ENCODE measurements at regions of chr10 and their contacts with region 1.

Region 1: DNA sequence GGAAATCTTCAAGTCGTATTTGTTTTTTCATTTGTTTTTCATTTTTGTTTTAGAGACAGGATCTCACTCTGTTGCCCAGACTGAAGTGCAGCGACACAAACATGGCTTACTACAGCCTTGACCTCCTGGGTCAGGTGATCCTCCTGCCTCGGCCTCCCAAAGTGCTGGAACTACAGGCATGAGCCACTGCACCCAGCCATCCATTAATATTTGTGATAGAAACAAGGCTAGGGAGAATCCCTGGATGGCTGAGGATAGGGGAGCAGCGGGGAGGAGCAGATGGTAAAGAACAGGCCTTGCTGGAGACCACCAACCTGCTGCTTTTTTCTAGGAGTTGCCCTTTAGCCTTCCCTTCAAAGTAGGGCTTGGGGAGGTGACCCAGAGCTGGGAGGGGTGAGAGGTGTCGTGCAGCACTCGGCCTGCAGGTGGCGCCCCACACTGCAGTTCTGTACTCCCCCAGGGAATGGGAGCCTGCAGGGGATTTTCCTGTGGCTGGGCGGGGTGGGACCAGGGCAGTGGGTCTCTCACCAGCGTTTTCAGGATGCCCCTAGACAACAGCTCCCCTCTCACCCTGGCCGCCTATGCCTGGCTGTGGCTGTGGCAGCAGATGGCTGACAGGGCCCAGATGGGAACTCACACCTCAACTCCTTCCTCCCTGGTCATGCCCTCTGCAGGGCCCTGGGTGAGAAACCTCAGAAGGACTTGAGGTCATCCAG is 12.6 kb upstream of the CDH23 start:
- H3K4me3 Mint-ChIP-seq: no peak overlapping the region
- H3K27ac Mint-ChIP-seq: peak overlapping the region; percentile 20
- H3K4me1 Mint-ChIP-seq: peaks cover 23% of the 10 kb centered on the region
- H3K27me3 Mint-ChIP-seq: peaks cover 2% of the 10 kb centered on the region

Region 2: DNA sequence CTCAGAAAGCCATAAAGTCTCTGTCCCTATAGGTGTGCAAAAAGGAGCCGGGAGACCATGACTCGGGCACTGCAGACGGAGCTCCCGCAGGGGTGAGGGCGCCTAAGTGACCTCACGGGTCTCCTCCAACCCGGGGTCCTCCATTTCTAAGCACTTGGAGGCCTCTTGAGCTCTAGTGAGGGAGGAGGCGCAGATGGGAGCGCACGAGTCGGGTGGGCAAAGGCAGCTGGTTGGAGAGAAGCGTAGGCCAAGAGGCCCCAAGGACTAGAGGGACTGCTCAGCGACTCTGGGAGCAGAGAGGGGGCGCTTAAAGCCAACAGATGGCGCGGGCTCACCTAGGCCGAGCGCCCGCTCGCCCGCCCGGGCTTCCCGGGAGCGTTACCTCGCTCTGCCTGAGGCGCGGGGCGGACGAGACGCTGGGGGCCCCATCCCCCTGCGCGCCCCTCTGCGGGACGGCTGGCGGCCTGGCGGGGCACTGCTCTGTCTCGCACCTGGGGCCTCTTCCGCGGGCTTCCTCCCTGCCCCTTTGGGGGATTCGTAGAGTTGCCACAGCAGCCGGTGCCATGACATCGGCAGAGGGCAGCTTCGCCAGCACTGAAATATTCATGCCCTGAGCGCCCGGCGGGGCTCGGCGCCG is 12.1 kb after region 1 on chr10:
- intact Hi-C with region 1: no loop called
- H3K4me3 Mint-ChIP-seq: no peak overlapping the region
- H3K27ac Mint-ChIP-seq: no peak overlapping the region
- H3K4me1 Mint-ChIP-seq: peaks cover 16% of the 10 kb centered on the region
- H3K27me3 Mint-ChIP-seq: peaks cover 80% of the 10 kb centered on the region

Region 3: DNA sequence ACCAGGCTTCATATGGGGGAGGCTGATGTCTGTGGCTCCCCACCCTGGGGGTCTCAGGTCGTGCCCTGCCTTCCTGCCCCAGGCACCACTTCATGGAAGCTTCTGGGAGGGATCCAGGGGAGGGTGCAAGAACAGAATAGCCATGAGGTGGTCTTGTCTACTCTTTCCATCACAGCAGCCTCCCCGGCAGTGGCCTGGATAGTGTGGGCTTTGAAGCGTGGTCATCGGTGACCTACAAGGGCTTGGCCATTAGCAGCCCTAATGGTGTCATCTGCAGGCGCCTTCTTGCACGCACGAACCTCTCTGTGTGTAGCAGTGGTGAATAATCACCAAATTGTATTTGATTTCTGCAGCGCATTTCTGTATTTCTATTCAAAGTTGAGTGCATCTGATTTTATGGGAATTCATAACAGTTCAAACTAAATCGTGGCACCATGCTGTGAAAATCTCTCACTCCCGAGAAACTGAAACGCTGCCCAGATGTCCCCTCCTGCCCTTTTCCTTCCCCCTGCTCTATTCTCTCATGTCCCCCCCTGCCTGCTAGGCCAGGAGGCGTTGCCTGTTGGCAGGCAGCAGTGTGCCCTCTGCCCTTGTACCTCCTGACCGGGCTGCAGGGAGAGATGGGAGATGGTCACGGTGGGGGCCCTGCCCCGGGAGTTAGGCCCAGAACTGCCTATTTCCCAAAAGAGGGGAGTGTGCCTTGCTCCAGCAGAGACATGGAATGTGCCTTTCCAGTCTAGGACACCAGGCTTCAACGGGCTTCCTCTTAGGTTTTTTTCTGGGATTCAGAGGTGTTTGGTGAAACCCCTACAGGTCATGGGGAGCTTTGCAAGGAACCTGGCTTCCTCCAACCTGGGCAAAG is 47.3 kb after region 1 on chr10:
- intact Hi-C with region 1: no loop called
- H3K4me3 Mint-ChIP-seq: no peak overlapping the region
- H3K27ac Mint-ChIP-seq: no peak overlapping the region
- H3K4me1 Mint-ChIP-seq: no peaks in the 10 kb centered on the region
- H3K27me3 Mint-ChIP-seq: peaks cover 16% of the 10 kb centered on the region

Region 4: DNA sequence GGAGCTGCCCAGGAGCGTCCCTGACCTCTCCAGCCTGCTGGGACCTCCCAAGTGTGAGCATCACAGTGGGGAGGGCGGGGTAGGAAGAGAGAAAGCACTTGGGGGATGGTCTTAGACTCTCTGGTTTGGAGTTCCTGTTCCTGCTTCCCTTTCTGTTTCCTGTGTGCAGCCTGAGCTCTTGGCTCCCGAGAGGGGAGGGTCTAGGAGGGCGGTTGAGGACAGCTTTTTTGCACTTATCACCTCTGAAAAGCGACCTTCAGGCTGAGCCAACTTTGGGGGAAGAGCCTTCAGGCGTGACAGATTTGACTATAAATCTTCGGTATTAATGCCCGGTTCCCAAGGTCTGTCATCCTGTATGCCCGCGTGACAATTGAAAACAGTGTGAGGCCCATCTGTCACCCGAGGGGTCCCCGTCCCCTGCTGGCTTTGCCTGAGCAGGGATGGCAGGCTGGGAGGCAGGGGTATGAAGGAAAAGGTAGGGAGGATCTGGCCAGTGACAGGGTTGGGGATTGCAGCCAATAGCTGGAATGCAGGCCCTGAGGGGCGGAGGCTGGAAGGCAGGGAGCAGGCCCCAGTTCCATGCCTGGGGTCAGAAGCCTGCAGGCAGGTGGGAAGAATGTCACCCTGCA is 91.2 kb after region 1 on chr10:
- intact Hi-C with region 1: loop called (anchors 10 kb)
- H3K4me3 Mint-ChIP-seq: peak overlapping the region; percentile 60
- H3K27ac Mint-ChIP-seq: peak overlapping the region; percentile 81
- H3K4me1 Mint-ChIP-seq: peaks cover 36% of the 10 kb centered on the region
- H3K27me3 Mint-ChIP-seq: peaks cover 4% of the 10 kb centered on the region

Region 5: GRCh38 chr10:71569775-71570588 is 185.9 kb after region 1 on chr10:
- intact Hi-C with region 1: loop called (anchors 2 kb)
- H3K4me3 Mint-ChIP-seq: no peak overlapping the region
- H3K27ac Mint-ChIP-seq: no peak overlapping the region
- H3K4me1 Mint-ChIP-seq: peaks cover 9% of the 10 kb centered on the region
- H3K27me3 Mint-ChIP-seq: peaks cover 2% of the 10 kb centered on the region

Region 6: DNA sequence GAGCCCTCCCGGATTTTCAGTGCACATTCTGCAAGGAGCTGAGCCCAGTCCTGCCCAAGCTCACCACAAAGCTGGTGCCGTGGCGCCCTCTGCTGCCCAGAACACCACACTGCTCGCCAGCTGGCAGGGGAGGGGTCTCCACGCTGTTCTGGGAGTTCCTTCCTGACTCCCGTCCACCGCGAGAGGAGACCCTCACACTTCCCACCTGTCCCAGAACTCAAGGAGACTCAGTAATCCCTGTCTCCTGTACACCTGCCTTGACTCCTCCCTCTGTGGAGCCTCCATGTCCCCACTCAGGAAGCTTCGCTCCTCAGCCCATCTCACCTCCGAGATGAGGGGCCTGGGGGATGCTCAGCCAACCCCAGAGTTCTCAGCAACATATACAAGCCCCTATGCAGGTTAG is 324.2 kb after region 1 on chr10:
- intact Hi-C with region 1: loop called (anchors 5 kb)
- H3K4me3 Mint-ChIP-seq: no peak overlapping the region
- H3K27ac Mint-ChIP-seq: peak overlapping the region; percentile 67
- H3K4me1 Mint-ChIP-seq: peaks cover 73% of the 10 kb centered on the region
- H3K27me3 Mint-ChIP-seq: no peaks in the 10 kb centered on the region